Mammary epithelial cell (primary cell): ENCODE measurements at regions of chr21 and their contacts with region 1.

Region 1: GRCh38 chr21:46060596-46061061 is 37.3 kb upstream of the COL6A2 start:
- DNase-seq: peak; percentile 67
- H3K4me3 ChIP-seq: no peak overlapping the region
- H3K27ac ChIP-seq: no peak overlapping the region
- H3K4me1 ChIP-seq: peaks cover 11% of the 10 kb centered on the region
- H3K27me3 ChIP-seq: no peaks in the 10 kb centered on the region
- CTCF ChIP-seq: no peak

Region 2: DNA sequence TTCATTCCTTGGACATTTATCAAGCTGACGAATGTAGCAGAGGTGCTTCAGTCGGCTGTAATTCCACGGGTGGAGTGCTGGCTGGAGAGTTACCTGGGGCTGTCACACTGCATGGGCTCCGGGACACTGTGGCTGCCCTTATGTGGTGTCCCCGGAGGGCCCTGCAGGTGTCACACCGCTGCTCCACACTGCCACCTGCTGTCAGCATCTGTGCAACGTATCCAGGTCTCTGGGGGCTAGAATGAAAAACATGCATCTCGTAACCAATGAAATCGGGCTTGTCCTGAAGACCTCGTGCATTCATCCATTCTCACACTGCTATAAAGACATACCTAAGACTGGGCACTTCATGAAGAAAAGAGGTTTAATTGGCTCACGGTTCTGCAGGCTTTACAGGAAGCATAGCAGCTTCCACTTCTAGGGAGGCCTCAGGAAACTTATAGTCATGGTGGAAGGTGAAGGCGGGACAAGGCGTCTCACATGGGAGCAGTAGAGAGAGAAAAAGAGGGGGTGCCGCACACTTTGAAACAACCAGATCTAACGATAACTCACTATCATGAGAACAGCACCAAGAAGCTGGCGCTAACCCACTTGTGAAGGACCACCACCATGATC is 463.8 kb before region 1 on chr21:
- CTCF ChIA-PET with region 1: no interaction called
- dilution Hi-C with region 1: loop called (anchors 25 kb)
- in situ Hi-C with region 1: no loop called
- intact Hi-C with region 1: no loop called
- DNase-seq: peak; percentile 21
- H3K4me3 ChIP-seq: no peak overlapping the region
- H3K27ac ChIP-seq: no peak overlapping the region
- H3K4me1 ChIP-seq: no peaks in the 10 kb centered on the region
- H3K27me3 ChIP-seq: no peaks in the 10 kb centered on the region
- CTCF ChIP-seq: peak; percentile 82 to 93

Region 3: GRCh38 chr21:46022551-46023525 is 37.8 kb before region 1 on chr21:
- CTCF ChIA-PET with region 1: no interaction called
- dilution Hi-C with region 1: loop called (anchors 5 kb)
- in situ Hi-C with region 1: no loop called
- intact Hi-C with region 1: no loop called
- DNase-seq: no peak
- H3K4me3 ChIP-seq: no peak overlapping the region
- H3K27ac ChIP-seq: no peak overlapping the region
- H3K4me1 ChIP-seq: no peaks in the 10 kb centered on the region
- H3K27me3 ChIP-seq: no peaks in the 10 kb centered on the region
- CTCF ChIP-seq: no peak

Region 4: DNA sequence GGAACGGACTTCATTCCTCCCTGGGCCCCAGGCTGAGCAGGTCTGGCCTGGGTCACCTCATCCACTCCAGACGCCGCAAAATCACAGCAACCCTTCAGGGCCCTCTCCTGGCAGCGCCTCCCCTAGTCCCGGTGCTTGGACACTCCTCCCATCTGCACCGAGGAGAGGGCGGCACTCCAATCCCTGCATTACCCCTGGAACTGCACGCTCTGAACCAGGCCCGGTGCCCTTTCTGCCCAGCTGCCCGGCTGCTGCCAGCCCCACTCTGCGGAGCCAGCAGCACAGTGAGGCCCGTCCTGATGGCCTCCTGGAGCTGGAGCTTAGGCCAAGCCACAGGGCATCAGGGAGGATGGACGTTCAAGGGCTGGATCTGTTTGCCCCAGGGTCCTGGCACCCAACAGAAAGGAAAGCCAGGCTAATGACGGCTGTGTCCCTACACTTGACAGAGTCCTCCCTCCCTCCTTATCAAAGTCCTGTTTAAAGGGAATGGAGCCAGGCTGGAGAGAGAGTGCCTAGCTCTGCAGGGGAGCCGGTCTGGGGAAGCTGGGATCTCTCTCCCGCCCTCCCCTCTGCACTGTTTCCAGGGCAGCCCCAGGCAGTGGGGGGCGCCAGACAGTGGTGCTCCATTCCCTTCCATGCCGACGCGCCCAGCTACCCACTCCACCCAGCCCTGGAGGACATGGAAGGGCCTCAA is 50.0 kb after region 1 on chr21:
- CTCF ChIA-PET with region 1: no interaction called
- dilution Hi-C with region 1: loop called (anchors 5 kb)
- in situ Hi-C with region 1: no loop called
- intact Hi-C with region 1: no loop called
- DNase-seq: no peak
- H3K4me3 ChIP-seq: no peak overlapping the region
- H3K27ac ChIP-seq: no peak overlapping the region
- H3K4me1 ChIP-seq: no peaks in the 10 kb centered on the region
- H3K27me3 ChIP-seq: no peaks in the 10 kb centered on the region
- CTCF ChIP-seq: no peak

Region 5: DNA sequence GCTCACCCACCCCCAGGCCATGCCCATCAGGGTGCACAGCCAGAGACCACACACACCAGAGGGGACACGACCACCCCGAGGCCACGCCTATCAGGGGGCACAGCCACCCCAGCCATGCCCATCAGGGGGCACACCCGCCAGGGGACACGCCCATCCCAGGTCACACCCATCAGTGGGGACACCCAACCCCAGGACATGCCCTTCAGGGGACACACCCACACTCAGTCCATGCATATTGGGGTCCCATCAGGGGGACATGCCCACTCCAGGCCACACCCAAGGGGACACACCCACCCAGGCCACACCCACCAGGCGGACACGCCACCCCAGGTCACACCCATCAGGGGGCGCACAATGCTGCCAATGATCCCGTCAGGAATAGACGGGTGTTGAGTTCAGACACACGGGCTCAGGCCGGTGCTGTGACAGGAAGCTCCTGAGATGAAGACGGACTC is 204.1 kb after region 1 on chr21:
- CTCF ChIA-PET with region 1: no interaction called
- dilution Hi-C with region 1: no loop called
- in situ Hi-C with region 1: no loop called
- intact Hi-C with region 1: no loop called
- DNase-seq: no peak
- H3K4me3 ChIP-seq: no peak overlapping the region
- H3K27ac ChIP-seq: no peak overlapping the region
- H3K4me1 ChIP-seq: no peaks in the 10 kb centered on the region
- H3K27me3 ChIP-seq: no peaks in the 10 kb centered on the region
- CTCF ChIP-seq: no peak